ENCODE measurements at regions of chr14 and their contacts with region 1.

Region 1: GRCh38 chr14:95534299-95535225 is at the start of gene GLRX5:
- DNase-seq: peak; percentile 100
- H3K4me3 ChIP-seq: peak within 1 kb of the TSS; percentile 93
- H3K27ac ChIP-seq: peak within 1 kb of the TSS; percentile 80
- H3K4me1 ChIP-seq: peaks cover 54% of the 10 kb centered on the region
- CTCF ChIP-seq: no peak
- total RNA-seq, gene GLRX5: 59.6 and 68.2 TPM in 2 replicates

Region 2: DNA sequence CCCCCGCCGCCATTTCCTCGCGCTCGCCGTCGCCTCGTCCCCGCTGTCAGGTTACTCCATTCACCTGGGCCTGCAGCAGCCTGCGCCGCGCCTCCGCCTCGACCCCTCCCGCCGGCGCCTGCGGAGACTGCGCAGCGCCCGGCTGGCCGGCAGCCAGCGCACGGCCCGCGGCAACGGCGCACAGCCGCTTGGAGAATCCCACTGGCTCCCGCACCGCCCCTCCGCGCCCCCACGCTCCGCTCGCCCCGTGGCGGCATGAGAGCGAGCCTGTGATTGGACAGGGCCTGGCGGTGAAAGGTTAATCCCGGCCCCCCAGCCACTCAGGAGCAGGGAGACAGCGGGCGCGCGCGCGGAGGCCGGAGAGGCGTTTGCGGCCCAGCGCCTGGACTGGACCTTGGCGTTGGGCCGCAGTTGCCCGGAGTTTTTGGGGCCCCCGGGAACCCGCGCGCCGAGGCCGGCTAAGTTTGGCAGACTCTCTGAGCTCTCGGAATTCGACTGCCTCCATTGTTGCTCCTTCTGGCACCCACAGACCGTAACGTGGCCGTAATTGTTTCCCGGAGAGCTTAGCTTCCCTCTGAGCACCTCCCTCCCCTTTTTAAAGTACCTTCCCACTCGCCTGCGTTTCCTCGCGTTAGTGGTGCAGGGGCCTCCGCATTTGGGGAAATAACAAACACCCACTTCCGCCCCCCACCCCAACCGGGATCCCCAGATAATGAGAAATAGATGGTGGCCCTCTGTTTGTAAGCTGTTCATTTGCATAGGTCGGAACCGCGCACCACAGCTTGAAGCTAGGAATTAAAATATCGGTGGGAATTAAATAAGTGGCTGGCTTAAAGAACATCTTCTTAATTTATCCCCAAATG is 377.0 kb before region 1 on chr14 and contains the start of gene DICER1:
- CTCF ChIA-PET with region 1: no interaction called
- POLR2A ChIA-PET with region 1: no interaction called
- intact Hi-C with region 1: loop called (anchors 5 kb)
- DNase-seq: peak; percentile 92
- H3K4me3 ChIP-seq: peak within 1 kb of the TSS; percentile 78
- H3K27ac ChIP-seq: peak within 1 kb of the TSS; percentile 73
- H3K4me1 ChIP-seq: peaks cover 34% of the 10 kb centered on the region
- CTCF ChIP-seq: no peak
- total RNA-seq, gene DICER1: 60.3 and 84.9 TPM in 2 replicates

Region 3: GRCh38 chr14:95327558-95328374 is 206.8 kb before region 1 on chr14:
- CTCF ChIA-PET with region 1: no interaction called
- POLR2A ChIA-PET with region 1: no interaction called
- intact Hi-C with region 1: loop called (anchors 5 kb)
- DNase-seq: peak; percentile 98
- H3K4me3 ChIP-seq: peak overlapping the region; percentile 45
- H3K27ac ChIP-seq: peak overlapping the region; percentile 69
- H3K4me1 ChIP-seq: peaks cover 47% of the 10 kb centered on the region
- CTCF ChIP-seq: no peak

Region 4: DNA sequence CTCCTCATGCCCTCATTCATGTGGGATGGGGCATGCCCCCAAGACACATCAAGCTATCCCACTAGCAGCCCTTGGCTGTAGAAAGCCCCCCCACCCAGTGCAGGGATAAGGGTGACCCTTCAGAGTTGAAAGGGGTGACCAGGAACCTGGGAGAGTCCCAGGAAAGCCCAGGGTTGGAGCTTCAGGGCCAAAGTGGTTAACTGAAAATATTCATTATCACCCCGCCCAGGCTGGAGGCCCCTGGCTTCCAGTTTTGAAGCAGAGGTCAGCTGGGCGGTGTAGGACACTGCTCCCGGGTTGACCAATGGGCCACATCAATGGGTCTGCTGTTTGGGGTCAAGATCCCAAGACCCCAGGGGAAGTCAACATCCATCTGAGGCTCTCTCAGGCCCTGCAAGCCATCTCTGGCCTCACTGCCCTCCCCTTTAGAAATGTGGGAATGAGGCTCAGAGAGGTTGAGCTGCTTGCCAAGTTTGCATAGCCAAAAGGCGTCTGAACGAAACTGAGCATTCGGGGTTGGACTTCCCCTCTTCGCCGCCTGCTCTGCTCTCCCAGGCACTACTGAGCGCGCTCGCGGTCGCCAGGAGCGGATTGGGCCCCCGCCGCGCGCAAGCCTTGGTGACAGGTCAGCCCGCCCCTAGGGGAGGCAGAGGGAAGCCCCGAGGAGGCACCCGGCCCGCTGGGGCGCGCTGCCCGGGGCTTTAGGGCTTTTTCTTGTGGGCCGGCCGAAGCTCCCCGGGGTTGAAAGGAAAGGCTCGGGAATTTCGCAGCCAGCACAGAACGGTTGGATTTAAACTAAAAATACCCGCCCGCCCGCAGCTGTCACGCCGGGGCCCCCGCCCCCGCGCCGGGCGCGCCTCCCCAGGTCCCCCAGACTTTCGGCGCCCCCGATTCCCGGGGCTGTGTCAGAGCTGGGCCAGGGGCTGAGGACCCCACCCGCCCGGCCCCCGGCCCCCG is 18.7 kb before region 1 on chr14:
- CTCF ChIA-PET with region 1: no interaction called
- POLR2A ChIA-PET with region 1: interaction called, 7 read pairs
- intact Hi-C with region 1: loop called (anchors 1 kb)
- DNase-seq: peak; percentile 88
- H3K4me3 ChIP-seq: peak overlapping the region; percentile 64
- H3K27ac ChIP-seq: no peak overlapping the region
- H3K4me1 ChIP-seq: peaks cover 57% of the 10 kb centered on the region
- CTCF ChIP-seq: peak; percentile 71

Region 5: GRCh38 chr14:95545179-95546168 is 10.9 kb after region 1 on chr14:
- CTCF ChIA-PET with region 1: no interaction called
- POLR2A ChIA-PET with region 1: interaction called, 10 read pairs
- intact Hi-C with region 1: no loop called
- DNase-seq: no peak
- H3K4me3 ChIP-seq: no peak overlapping the region
- H3K27ac ChIP-seq: no peak overlapping the region
- H3K4me1 ChIP-seq: no peaks in the 10 kb centered on the region
- CTCF ChIP-seq: no peak

Region 6: GRCh38 chr14:95686938-95687334 is 152.4 kb after region 1 on chr14:
- CTCF ChIA-PET with region 1: no interaction called
- POLR2A ChIA-PET with region 1: no interaction called
- intact Hi-C with region 1: no loop called
- DNase-seq: peak; percentile 55
- H3K4me3 ChIP-seq: peak overlapping the region; percentile 42
- H3K27ac ChIP-seq: peak overlapping the region; percentile 28
- H3K4me1 ChIP-seq: peaks cover 47% of the 10 kb centered on the region
- CTCF ChIP-seq: no peak

Region 7: DNA sequence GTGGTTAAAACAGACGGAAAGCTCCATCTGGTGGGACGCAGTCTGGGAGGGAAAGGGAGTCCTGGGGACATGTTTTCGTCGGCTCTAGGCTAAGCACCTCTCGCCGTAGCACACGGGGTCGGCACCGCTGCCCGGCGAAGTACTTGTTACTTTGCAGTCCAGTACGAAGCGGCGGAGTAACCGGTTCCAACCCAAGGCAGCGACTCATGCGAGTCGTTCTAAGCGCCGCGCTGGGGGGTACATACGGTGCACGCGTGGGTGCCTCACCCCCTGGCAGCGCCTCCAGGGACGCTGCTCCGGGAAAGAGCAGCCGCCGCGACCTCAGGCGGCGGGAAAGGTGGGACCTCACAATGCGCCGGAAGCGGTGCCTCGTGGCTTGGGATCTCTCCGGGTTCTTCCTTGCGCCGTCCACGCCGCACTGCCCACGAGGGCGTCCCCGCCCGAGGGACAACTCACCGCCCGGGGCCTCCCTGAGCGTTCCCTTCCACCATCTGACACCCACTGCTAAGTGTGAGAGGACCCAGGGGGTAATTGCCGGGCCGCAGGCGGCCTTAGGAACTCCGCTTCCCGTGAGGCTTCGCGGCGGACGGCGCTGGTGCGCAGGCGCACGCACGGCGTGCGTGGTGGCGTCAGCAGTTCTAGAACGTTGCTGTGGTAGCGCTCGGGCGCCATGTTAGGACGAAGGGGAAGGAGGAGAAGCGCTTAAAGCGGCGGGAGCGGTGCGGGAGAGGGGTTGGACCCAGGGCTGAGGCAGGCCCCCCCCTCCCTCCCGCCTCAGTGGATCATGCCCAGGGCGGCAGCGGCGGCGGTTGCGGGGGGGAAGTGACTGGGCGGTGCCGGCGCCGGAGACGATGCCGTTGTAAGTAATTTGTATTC is 967.4 kb after region 1 on chr14 and contains the start of gene PAPOLA:
- CTCF ChIA-PET with region 1: no interaction called
- POLR2A ChIA-PET with region 1: no interaction called
- intact Hi-C with region 1: loop called (anchors 10 kb)
- DNase-seq: peak; percentile 96
- H3K4me3 ChIP-seq: peak within 1 kb of the TSS; percentile 99
- H3K27ac ChIP-seq: peak within 1 kb of the TSS; percentile 79
- H3K4me1 ChIP-seq: peaks cover 40% of the 10 kb centered on the region
- CTCF ChIP-seq: peak; percentile 41
- total RNA-seq, gene PAPOLA: 80.1 and 99.3 TPM in 2 replicates

Measured in OCI-LY7 (cell line).